Activated T-helper 1 cell treated with anti-CD3 and anti-CD28 coated beads, Interleukin-12 subunit alpha, Interleukin-12 subunit beta, Interleukin-2, Interleukin-4 antibody, amounts not matched to agents 30 ng/mL and 10 ng/mL and 1 ng/mL, durations not matched to agents 14 hours and 24 hours and 36 hours (primary cell): ENCODE measurements at regions of chr3 and their contacts with region 1.

Region 1: DNA sequence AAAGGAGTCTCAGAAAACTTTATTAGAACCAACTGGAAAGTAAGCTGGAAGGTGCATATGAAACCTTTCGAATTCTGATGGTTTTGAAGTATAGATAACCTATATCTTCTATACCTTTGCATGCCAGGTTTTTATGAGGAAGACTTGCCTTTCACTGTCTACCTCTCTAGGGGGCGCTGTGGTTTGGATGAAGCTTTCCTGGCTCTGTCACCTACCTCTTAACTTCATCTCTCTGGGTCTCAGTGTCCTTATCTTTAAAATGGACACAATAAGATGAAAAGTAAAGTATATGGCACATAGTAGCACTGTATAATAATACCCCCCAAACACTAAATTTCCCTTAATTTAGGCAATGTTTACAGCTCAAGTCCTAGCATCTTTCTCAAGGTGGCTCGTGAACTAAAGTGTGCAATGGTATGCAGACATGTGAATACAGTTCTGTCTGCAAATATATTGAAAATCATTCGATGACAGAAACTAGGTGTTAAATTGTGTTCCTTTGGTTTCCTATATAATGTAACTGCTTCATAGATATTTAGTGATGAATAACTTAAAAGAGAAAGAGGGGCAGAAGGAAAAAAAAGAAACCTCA is 314.3 kb downstream of the CHST2 start:
- DNase-seq: no peak
- H3K4me3 Mint-ChIP-seq: no peak overlapping the region
- H3K27ac Mint-ChIP-seq: no peak overlapping the region
- H3K4me1 Mint-ChIP-seq: no peaks in the 10 kb centered on the region
- H3K27me3 Mint-ChIP-seq: no peaks in the 10 kb centered on the region

Region 2: DNA sequence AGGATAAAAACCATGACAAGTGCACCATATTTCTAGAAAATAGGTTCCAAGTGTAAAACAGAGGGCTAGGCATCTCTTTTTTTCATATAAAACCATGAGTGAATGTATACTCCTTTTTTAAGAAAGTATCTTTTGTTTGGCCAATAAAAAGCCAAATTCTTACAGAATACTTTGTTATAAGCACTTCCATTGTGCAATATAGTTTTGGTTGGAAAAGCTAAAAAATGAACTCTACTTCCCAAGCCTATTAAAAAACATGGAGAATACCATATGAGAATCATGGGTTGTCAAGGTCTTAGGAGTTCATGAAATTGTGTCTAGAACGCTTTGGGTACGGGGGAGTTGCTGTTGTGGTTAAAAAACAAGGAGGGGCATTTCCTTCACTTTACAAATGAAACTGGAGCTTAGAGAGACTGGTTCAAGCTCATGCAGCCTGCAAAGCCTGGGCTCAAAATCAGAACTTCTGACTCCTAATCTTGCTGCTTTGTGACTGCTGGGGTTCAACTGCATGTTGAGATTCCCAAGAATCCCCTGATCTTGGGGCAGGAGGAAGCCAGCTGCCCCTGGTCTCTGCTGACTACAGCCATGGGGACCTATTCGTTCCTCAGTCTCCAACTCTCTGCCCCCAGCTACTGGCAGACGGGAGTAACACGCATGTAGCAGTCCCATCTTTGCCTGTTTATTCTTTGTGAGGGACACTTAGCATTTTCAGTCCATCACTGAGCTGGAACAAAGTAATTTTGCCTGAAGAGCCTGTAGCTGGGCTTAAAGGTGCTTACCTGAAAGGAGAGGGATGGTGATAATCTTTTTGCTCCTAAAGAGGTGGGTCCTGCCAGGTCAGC is 85.2 kb before region 1 on chr3:
- intact Hi-C with region 1: no loop called
- DNase-seq: no peak
- H3K4me3 Mint-ChIP-seq: no peak overlapping the region
- H3K27ac Mint-ChIP-seq: no peak overlapping the region
- H3K4me1 Mint-ChIP-seq: peaks cover 28% of the 10 kb centered on the region
- H3K27me3 Mint-ChIP-seq: no peaks in the 10 kb centered on the region

Region 3: DNA sequence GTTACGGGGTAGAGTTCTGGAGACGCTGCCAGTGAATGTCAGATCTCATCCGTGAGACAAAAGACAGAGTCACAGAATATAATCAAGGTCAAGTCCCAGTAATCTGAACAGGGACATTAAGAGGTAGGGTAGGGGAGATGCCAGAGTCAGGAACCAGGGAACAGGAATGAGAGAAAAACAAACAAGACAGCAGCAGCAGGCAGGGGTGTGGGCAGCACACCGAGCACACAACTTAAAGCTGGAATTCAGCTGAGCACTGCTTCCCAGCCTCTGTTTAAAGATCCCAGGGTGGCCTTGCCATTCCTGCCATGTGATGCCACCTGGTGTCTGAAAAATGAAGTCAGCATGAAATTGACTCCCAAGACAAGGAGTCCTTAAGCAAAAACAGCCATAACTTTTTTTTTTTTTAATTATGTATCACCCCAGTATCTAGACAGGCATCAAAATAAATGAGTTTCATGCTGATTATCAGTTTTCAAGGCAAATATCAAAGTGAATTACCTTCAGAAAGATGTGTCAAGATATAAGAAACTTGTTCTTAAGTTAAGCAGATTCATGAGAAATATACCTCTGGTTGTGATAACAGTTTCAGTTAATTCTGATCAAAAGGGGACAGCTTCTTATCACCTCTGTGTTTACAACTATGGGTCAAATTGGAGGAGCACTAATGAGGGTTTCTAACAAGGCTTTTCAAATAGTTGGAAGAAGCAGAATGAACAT is 210.6 kb after region 1 on chr3:
- intact Hi-C with region 1: loop called (anchors 1 kb)
- DNase-seq: no peak
- H3K4me3 Mint-ChIP-seq: no peak overlapping the region
- H3K27ac Mint-ChIP-seq: no peak overlapping the region
- H3K4me1 Mint-ChIP-seq: no peaks in the 10 kb centered on the region
- H3K27me3 Mint-ChIP-seq: no peaks in the 10 kb centered on the region

Region 4: GRCh38 chr3:143674100-143674968 is 240.5 kb after region 1 on chr3:
- intact Hi-C with region 1: loop called (anchors 1 kb)
- DNase-seq: peak; percentile 64
- H3K4me3 Mint-ChIP-seq: no peak overlapping the region
- H3K27ac Mint-ChIP-seq: peak overlapping the region; percentile 11
- H3K4me1 Mint-ChIP-seq: peaks cover 7% of the 10 kb centered on the region
- H3K27me3 Mint-ChIP-seq: no peaks in the 10 kb centered on the region

Region 5: DNA sequence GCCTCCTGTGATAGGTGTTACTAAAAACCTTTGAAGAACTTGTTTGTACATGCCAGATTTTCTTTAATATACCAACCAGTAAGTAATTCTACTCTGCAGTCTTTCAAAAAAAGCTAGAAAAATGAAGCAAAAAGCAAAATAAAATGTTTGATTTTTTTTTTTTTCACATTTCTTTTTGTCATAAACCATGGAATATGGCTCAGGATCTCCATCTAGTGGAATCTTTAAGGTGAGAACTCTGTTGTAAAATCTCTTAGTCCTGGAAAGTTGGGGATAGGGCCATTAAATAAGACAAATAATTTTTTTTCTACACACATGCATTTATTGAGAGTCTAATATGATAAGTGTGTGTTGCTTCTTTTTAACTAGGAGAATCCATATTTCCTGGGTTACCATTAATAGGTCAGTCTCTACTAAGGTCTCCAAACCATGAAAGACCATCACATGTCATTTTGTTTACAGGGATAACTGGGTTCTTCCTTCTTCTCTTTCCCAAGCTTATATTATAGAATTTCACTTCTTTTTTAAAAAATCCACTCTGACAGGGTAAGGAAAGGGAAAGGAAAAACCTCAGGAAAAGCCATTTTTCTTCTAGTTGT is 329.8 kb after region 1 on chr3:
- intact Hi-C with region 1: loop called (anchors 10 kb)
- DNase-seq: no peak
- H3K4me3 Mint-ChIP-seq: no peak overlapping the region
- H3K27ac Mint-ChIP-seq: no peak overlapping the region
- H3K4me1 Mint-ChIP-seq: no peaks in the 10 kb centered on the region
- H3K27me3 Mint-ChIP-seq: peaks cover 2% of the 10 kb centered on the region